B cell (primary cell): ENCODE measurements at regions of chr11 and their contacts with region 1.

Region 1: GRCh38 chr11:62591448-62592145 is at the start of gene TUT1:
- DNase-seq: peak; percentile 99
- ATAC-seq: peak; percentile 89
- H3K4me3 ChIP-seq: peak within 1 kb of the TSS; percentile 85 to 97 (median 93)
- H3K4me3 Mint-ChIP-seq: peak within 1 kb of the TSS; percentile 91
- H3K27ac ChIP-seq: peak within 1 kb of the TSS; percentile 90
- H3K27ac Mint-ChIP-seq: peak within 1 kb of the TSS; percentile 96
- H3K4me1 ChIP-seq: peaks cover 23 to 34% of the 10 kb centered on the region in 2 donors
- H3K4me1 Mint-ChIP-seq: peaks cover 43% of the 10 kb centered on the region
- H3K27me3 ChIP-seq: no peaks in the 10 kb centered on the region
- H3K27me3 Mint-ChIP-seq: no peaks in the 10 kb centered on the region
- CTCF ChIP-seq: no peak
- total RNA-seq, gene TUT1: 33.8 and 47.7 TPM in 2 replicates

Region 2: GRCh38 chr11:62427630-62428233 is 163.9 kb before region 1 on chr11:
- CTCF ChIA-PET with region 1: interaction called, 26 read pairs
- POLR2A ChIA-PET with region 1: no interaction called
- intact Hi-C with region 1: no loop called
- DNase-seq: no peak
- ATAC-seq: no peak
- H3K4me3 ChIP-seq: no peak overlapping the region
- H3K4me3 Mint-ChIP-seq: no peak overlapping the region
- H3K27ac ChIP-seq: no peak overlapping the region
- H3K27ac Mint-ChIP-seq: peak overlapping the region; percentile 12
- H3K4me1 ChIP-seq: peaks cover 4 to 13% of the 10 kb centered on the region in 2 donors
- H3K4me1 Mint-ChIP-seq: peaks cover 16% of the 10 kb centered on the region
- H3K27me3 ChIP-seq: peaks cover 0 to 2% (median 0%) of the 10 kb centered on the region in 4 experiments
- H3K27me3 Mint-ChIP-seq: peaks cover 10% of the 10 kb centered on the region
- CTCF ChIP-seq: no peak

Region 3: GRCh38 chr11:62612366-62613290 is 21.0 kb after region 1 on chr11 and contains the starts of genes EML3 and ROM1:
- CTCF ChIA-PET with region 1: interaction called, 32 read pairs
- POLR2A ChIA-PET with region 1: interaction called, 14 read pairs
- intact Hi-C with region 1: loop called (anchors 1 kb)
- DNase-seq: peak; percentile 92
- ATAC-seq: peak; percentile 79
- H3K4me3 ChIP-seq: peak within 1 kb of the TSS; percentile 70 to 84 (median 75)
- H3K4me3 Mint-ChIP-seq: peak within 1 kb of the TSS; percentile 97
- H3K27ac ChIP-seq: peak within 1 kb of the TSS; percentile 76 to 96
- H3K27ac Mint-ChIP-seq: peak within 1 kb of the TSS; percentile 99
- H3K4me1 ChIP-seq: peaks cover 10 to 25% of the 10 kb centered on the region in 2 donors
- H3K4me1 Mint-ChIP-seq: peaks cover 25% of the 10 kb centered on the region
- H3K27me3 ChIP-seq: no peaks in the 10 kb centered on the region
- H3K27me3 Mint-ChIP-seq: no peaks in the 10 kb centered on the region
- CTCF ChIP-seq: peak; percentile 99
- total RNA-seq, gene EML3: 127 and 135 TPM in 2 replicates
- total RNA-seq, gene ROM1: 0.68 and 2.0 TPM in 2 replicates

Region 4: DNA sequence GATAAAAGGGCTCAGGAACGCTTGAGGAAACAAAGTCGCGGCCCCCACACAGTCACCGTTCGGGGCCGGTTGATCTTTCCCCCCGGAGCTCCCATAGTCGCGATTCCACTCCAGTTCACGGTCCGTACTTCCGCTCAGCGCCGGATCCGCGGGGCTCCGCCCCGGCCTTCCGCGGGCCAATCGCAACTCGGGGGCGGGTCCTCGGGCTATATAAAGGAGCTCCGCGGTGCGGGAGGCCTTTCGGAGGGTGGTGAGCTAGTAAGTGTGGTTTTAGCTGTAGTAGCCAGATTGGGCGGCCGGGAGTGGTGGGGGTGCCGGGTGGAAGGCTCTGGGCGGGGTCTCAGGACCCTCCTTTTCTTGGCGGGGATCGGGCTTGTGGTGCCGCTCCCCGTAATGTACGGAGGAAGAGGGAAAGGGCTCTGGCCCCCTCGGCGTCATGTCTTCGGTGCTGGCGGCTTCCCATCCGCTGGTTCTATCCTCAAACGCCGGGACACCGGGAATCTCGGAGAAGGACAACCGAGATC is 73.5 kb after region 1 on chr11 and contains the starts of genes C11orf98 and CSKMT:
- CTCF ChIA-PET with region 1: interaction called, 10 read pairs
- POLR2A ChIA-PET with region 1: interaction called, 18 read pairs
- intact Hi-C with region 1: loop called (anchors 1 kb)
- DNase-seq: peak; percentile 95
- ATAC-seq: peak; percentile 90
- H3K4me3 ChIP-seq: peak within 1 kb of the TSS; percentile 79 to 98 (median 91)
- H3K4me3 Mint-ChIP-seq: peak within 1 kb of the TSS; percentile 97
- H3K27ac ChIP-seq: peak within 1 kb of the TSS; percentile 73 to 81
- H3K27ac Mint-ChIP-seq: peak within 1 kb of the TSS; percentile 93
- H3K4me1 ChIP-seq: peaks cover 17 to 35% of the 10 kb centered on the region in 2 donors
- H3K4me1 Mint-ChIP-seq: peaks cover 45% of the 10 kb centered on the region
- H3K27me3 ChIP-seq: no peaks in the 10 kb centered on the region
- H3K27me3 Mint-ChIP-seq: no peaks in the 10 kb centered on the region
- CTCF ChIP-seq: no peak
- total RNA-seq, gene C11orf98: 48.1 and 52.0 TPM in 2 replicates
- total RNA-seq, gene CSKMT: 57.3 and 78.7 TPM in 2 replicates

Region 5: DNA sequence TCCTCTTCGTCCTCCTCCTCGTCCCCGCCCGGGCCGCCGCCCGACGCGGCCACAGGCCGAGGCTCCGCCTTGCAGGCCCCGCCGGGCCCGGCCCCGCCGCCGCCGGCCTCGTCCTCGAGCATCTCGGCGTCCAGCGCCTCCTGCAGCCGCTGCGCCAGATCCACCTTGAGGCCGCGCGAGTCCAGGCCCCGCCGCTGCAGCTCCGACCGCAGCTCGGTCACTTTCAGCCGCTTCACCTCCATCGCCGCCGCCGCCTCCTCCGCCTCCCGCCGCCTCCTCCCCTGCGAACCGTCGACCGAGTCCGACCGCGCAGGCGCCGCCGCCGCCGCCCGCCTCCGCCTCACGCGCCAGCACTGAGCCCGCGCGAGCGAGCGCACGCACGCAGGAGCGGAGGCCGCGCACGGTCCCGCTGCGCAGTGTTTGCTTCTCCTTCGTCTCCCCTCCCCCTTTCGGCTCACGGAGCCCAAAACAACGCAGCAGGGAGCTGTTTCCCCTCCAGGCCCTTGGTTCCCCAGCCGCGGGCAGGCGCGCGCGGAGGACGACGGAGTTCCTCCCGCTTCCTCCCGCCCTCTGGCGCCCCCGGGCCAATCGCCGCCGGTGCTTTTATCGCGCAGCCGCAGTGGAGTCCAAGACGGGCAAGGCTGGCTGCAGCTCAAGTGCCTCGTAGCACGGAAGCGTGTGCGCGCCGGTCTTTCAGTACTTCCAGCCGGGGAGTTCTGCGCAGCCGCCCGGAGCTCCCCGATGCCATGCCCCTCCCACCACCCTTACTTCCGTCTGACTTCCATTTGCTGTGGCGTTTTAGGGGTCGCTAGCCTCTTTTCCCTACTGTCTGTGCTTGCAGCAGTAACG is 135.5 kb after region 1 on chr11 and contains the start of gene HNRNPUL2:
- CTCF ChIA-PET with region 1: no interaction called
- POLR2A ChIA-PET with region 1: interaction called, 14 read pairs
- intact Hi-C with region 1: loop called (anchors 2 kb)
- DNase-seq: peak; percentile 99
- ATAC-seq: peak; percentile 79
- H3K4me3 ChIP-seq: peak within 1 kb of the TSS; percentile 96 to 100 (median 99)
- H3K4me3 Mint-ChIP-seq: peak within 1 kb of the TSS; percentile 95
- H3K27ac ChIP-seq: peak within 1 kb of the TSS; percentile 90 to 91
- H3K27ac Mint-ChIP-seq: peak within 1 kb of the TSS; percentile 99
- H3K4me1 ChIP-seq: peaks cover 37 to 41% of the 10 kb centered on the region in 2 donors
- H3K4me1 Mint-ChIP-seq: peaks cover 53% of the 10 kb centered on the region
- H3K27me3 ChIP-seq: no peaks in the 10 kb centered on the region
- H3K27me3 Mint-ChIP-seq: no peaks in the 10 kb centered on the region
- CTCF ChIP-seq: no peak
- total RNA-seq, gene HNRNPUL2: 70.4 and 78.2 TPM in 2 replicates

Region 6: GRCh38 chr11:62831520-62832335 is 240.1 kb after region 1 on chr11 and contains the start of gene STX5:
- CTCF ChIA-PET with region 1: no interaction called
- POLR2A ChIA-PET with region 1: interaction called, 10 read pairs
- intact Hi-C with region 1: no loop called
- DNase-seq: peak; percentile 100
- ATAC-seq: peak; percentile 95
- H3K4me3 ChIP-seq: peak within 1 kb of the TSS; percentile 69 to 96 (median 92)
- H3K4me3 Mint-ChIP-seq: peak within 1 kb of the TSS; percentile 92
- H3K27ac ChIP-seq: peak within 1 kb of the TSS; percentile 96 to 99
- H3K27ac Mint-ChIP-seq: peak within 1 kb of the TSS; percentile 97
- H3K4me1 ChIP-seq: peaks cover 16 to 30% of the 10 kb centered on the region in 2 donors
- H3K4me1 Mint-ChIP-seq: peaks cover 43% of the 10 kb centered on the region
- H3K27me3 ChIP-seq: no peaks in the 10 kb centered on the region
- H3K27me3 Mint-ChIP-seq: no peaks in the 10 kb centered on the region
- CTCF ChIP-seq: no peak
- total RNA-seq, gene STX5: 98.1 and 99.1 TPM in 2 replicates

Region 7: DNA sequence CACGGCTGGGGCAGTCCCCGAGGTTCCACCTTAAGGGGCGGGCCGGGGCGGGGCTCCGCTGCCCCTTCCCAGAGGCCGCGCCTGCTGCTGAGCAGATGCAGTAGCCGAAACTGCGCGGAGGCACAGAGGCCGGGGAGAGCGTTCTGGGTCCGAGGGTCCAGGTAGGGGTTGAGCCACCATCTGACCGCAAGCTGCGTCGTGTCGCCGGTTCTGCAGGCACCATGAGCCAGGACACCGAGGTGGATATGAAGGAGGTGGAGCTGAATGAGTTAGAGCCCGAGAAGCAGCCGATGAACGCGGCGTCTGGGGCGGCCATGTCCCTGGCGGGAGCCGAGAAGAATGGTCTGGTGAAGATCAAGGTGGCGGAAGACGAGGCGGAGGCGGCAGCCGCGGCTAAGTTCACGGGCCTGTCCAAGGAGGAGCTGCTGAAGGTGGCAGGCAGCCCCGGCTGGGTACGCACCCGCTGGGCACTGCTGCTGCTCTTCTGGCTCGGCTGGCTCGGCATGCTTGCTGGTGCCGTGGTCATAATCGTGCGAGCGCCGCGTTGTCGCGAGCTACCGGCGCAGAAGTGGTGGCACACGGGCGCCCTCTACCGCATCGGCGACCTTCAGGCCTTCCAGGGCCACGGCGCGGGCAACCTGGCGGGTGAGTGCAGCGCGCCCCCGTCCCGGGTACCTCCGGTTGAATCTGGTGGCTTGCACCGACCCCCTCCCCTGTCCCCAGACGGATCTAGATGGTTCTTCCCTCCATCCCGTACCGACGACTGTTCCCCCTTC is 289.4 kb after region 1 on chr11 and contains the start of gene SLC3A2:
- CTCF ChIA-PET with region 1: interaction called, 5 read pairs
- POLR2A ChIA-PET with region 1: interaction called, 9 read pairs
- intact Hi-C with region 1: loop called (anchors 5 kb)
- DNase-seq: peak; percentile 93
- ATAC-seq: peak; percentile 77
- H3K4me3 ChIP-seq: peak within 1 kb of the TSS; percentile 66 to 93 (median 78)
- H3K4me3 Mint-ChIP-seq: peak within 1 kb of the TSS; percentile 100
- H3K27ac ChIP-seq: peak within 1 kb of the TSS; percentile 86 to 90
- H3K27ac Mint-ChIP-seq: peak within 1 kb of the TSS; percentile 100
- H3K4me1 ChIP-seq: peaks cover 25 to 36% of the 10 kb centered on the region in 2 donors
- H3K4me1 Mint-ChIP-seq: peaks cover 39% of the 10 kb centered on the region
- H3K27me3 ChIP-seq: no peaks in the 10 kb centered on the region
- H3K27me3 Mint-ChIP-seq: no peaks in the 10 kb centered on the region
- CTCF ChIP-seq: peak; percentile 87
- total RNA-seq, gene SLC3A2: 148 and 175 TPM in 2 replicates